Endothelial cell of umbilical vein (primary cell): ENCODE measurements at regions of chr7 and their contacts with region 1.

Region 1: GRCh38 chr7:128387216-128388144 is 22.3 kb downstream of the IMPDH1 start:
- DNase-seq: peak; percentile 71
- H3K4me3 ChIP-seq: no peak overlapping the region
- H3K27ac ChIP-seq: no peak overlapping the region
- H3K4me1 ChIP-seq: no peaks in the 10 kb centered on the region
- H3K27me3 ChIP-seq: peaks cover 0 to 5% of the 10 kb centered on the region in 2 experiments
- CTCF ChIP-seq: peak; percentile 75 to 92
- POLR2A ChIP-seq: no peak

Region 2: DNA sequence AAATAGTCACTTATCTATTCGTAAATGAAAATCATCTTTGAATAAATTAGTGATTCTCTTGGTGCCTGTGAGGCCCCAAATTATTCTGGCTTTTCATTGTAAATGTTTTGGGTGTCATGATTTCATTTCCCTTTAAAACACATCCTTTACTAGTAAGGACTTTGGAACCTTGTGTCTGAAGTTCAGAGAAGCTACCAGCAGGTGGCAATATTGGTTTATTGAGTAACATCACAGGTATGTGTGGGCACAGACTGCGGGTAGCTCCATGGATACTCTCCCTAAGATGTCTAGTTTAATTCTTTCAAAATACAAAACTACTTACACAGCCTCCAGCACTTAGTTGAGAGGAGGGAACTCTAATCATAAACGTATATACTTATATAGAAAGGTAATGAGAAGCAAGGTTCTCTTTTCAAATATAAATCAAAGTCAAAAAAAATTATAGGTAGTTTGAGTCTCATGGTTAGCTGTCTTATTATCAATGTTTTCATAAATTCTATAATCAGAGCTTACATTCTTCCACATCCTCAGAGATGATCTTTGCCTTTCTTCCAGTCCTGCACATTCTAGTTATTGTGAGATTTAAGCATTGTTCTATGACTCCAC is 1584.3 kb before region 1 on chr7:
- CTCF ChIA-PET with region 1: interaction called, 17 read pairs
- POLR2A ChIA-PET with region 1: no interaction called
- dilution Hi-C with region 1: no loop called
- intact Hi-C with region 1: no loop called
- DNase-seq: peak; percentile 65
- H3K4me3 ChIP-seq: no peak overlapping the region
- H3K27ac ChIP-seq: no peak overlapping the region
- H3K4me1 ChIP-seq: no peaks in the 10 kb centered on the region
- H3K27me3 ChIP-seq: no peaks in the 10 kb centered on the region
- CTCF ChIP-seq: peak; percentile 43
- POLR2A ChIP-seq: no peak

Region 3: DNA sequence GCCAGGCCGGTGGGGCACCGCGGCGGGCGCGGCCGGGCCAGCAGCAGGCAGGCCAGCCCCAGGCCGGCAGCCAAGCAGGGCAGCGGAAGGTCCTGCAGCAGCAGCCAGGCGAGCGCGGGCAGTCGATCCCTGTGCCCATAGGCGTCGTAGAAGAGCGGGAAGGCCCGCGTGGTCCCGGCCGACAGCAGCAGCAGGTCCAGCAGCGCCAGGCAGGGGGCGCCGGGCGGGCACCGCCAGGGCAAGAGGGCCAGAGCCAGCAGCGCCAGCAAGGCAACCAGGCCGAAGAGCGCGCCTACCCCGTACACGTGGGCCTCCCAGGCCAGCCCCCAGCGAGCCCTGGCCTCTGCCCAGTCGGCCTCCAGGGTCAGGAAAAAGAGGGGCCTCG is 35.3 kb before region 1 on chr7:
- CTCF ChIA-PET with region 1: interaction called, 778 read pairs
- POLR2A ChIA-PET with region 1: interaction called, 4 read pairs
- dilution Hi-C with region 1: no loop called
- intact Hi-C with region 1: loop called (anchors 1 kb)
- DNase-seq: peak; percentile 72
- H3K4me3 ChIP-seq: no peak overlapping the region
- H3K27ac ChIP-seq: no peak overlapping the region
- H3K4me1 ChIP-seq: no peaks in the 10 kb centered on the region
- H3K27me3 ChIP-seq: peaks cover 46 to 51% of the 10 kb centered on the region in 2 experiments
- CTCF ChIP-seq: peak; percentile 74 to 91
- POLR2A ChIP-seq: no peak

Region 4: DNA sequence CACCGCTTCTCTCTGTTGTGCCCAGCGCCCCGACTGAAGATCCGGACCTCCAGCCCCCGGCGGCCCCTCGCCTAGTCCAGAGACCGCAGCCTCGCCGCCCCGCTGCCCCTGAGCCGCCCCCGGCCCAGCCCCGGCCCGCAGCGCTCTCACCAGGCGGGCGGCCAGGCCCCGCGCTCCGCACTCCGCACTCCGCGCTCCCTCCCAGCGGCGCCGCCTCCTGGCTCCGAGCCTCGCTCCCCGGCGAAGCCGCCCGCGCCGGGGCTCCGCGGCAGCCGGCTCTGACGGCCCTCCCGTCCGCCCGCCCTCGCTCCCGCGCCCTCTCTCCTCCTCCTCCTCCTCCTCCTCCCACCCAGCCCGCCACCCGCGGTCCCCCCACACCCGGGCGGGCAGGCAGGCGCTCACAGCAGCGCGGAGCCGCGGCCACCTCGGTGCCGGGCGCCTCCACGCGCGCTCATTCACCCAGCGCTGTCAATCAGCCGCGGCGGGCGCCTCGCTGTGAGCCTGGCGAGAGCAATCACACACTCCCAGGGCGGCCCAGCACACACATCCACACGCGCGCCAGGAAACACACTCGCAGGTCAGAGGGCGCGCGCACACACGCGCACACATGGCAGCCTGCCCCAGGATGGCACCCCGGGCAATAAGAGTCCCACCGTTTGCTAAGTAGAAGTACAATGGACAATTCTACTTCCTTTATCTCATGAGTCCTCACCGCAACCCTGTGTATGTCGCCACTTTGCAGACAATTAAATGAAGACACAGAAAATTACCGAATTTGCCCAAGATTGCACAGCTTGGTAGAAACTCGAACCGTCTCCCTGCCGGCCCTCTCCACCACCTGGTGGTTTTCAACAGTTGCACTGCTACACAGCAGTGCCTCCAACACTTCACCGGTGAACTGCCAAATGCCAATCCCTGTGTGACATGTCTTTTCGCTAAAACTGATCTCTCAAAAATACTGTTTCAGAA is 25.8 kb before region 1 on chr7 and contains the start of gene PRRT4:
- CTCF ChIA-PET with region 1: interaction called, 778 read pairs
- POLR2A ChIA-PET with region 1: no interaction called
- dilution Hi-C with region 1: no loop called
- intact Hi-C with region 1: loop called (anchors 2 kb)
- DNase-seq: no peak
- H3K4me3 ChIP-seq: peak within 1 kb of the TSS in 2 of 3 experiments; percentile 9 to 32
- H3K27ac ChIP-seq: no peak within 1 kb of the TSS
- H3K4me1 ChIP-seq: peaks cover 4% of the 10 kb centered on the region
- H3K27me3 ChIP-seq: peaks cover 56 to 68% of the 10 kb centered on the region in 2 experiments
- CTCF ChIP-seq: no peak
- POLR2A ChIP-seq: no peak
- total RNA-seq, gene PRRT4: not detected in 2 replicates

Region 5: GRCh38 chr7:128373606-128374005 is 13.9 kb before region 1 on chr7:
- CTCF ChIA-PET with region 1: interaction called, 22 read pairs
- POLR2A ChIA-PET with region 1: no interaction called
- dilution Hi-C with region 1: no loop called
- intact Hi-C with region 1: no loop called
- DNase-seq: no peak
- H3K4me3 ChIP-seq: no peak overlapping the region
- H3K27ac ChIP-seq: no peak overlapping the region
- H3K4me1 ChIP-seq: no peaks in the 10 kb centered on the region
- H3K27me3 ChIP-seq: peaks cover 2 to 8% of the 10 kb centered on the region in 2 experiments
- CTCF ChIP-seq: no peak
- POLR2A ChIP-seq: no peak

Region 6: GRCh38 chr7:128398016-128398840 is 10.7 kb after region 1 on chr7:
- CTCF ChIA-PET with region 1: interaction called, 11 read pairs
- POLR2A ChIA-PET with region 1: no interaction called
- dilution Hi-C with region 1: no loop called
- intact Hi-C with region 1: no loop called
- DNase-seq: peak; percentile 42
- H3K4me3 ChIP-seq: no peak overlapping the region
- H3K27ac ChIP-seq: no peak overlapping the region
- H3K4me1 ChIP-seq: no peaks in the 10 kb centered on the region
- H3K27me3 ChIP-seq: no peaks in the 10 kb centered on the region
- CTCF ChIP-seq: peak; percentile 80 to 92
- POLR2A ChIP-seq: no peak

Region 7: DNA sequence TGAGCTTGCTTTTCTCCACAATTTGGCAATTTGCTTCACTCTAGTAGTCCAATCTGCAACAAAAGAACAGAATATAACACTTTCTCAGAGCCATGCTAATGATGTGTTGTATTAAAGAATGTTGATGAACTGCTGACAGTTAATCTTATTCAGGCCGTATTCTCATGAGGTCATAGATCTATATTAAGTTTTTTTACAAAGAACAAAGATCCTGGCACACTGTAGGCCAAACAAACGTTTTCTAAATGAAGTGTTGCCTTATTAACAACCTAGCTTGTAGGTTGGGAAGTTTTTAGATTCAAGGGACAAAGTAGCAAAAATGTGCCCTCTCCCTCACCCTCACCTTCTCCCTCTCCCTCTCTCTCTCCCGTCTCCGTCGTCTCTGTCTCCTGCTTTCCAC is 75.0 kb after region 1 on chr7:
- CTCF ChIA-PET with region 1: interaction called, 11 read pairs
- POLR2A ChIA-PET with region 1: no interaction called
- dilution Hi-C with region 1: no loop called
- intact Hi-C with region 1: no loop called
- DNase-seq: no peak
- H3K4me3 ChIP-seq: no peak overlapping the region
- H3K27ac ChIP-seq: no peak overlapping the region
- H3K4me1 ChIP-seq: peaks cover 3% of the 10 kb centered on the region
- H3K27me3 ChIP-seq: no peaks in the 10 kb centered on the region
- CTCF ChIP-seq: no peak
- POLR2A ChIP-seq: no peak

Region 8: DNA sequence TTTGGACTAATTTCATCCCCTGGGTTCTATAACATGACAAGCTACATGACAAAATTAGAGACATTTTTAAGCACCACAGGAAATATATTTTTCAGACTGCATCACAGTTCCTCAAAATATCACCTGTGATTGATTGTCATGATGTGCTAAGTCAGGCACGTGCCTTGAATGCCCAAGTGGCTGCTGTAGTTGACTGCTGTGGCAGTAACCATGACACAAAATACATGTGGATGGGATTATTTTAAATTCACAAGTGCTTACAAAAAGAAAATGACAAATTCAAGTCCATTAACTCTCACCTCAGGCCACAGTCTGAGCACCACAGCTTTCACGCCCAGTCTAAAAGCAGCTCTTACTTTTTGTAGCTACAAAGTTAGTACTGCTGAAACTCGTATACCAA is 622.0 kb after region 1 on chr7:
- CTCF ChIA-PET with region 1: no interaction called
- POLR2A ChIA-PET with region 1: no interaction called
- dilution Hi-C with region 1: no loop called
- intact Hi-C with region 1: no loop called
- DNase-seq: no peak
- H3K4me3 ChIP-seq: no peak overlapping the region
- H3K27ac ChIP-seq: no peak overlapping the region
- H3K4me1 ChIP-seq: no peaks in the 10 kb centered on the region
- H3K27me3 ChIP-seq: no peaks in the 10 kb centered on the region
- CTCF ChIP-seq: no peak
- POLR2A ChIP-seq: no peak

Region 9: DNA sequence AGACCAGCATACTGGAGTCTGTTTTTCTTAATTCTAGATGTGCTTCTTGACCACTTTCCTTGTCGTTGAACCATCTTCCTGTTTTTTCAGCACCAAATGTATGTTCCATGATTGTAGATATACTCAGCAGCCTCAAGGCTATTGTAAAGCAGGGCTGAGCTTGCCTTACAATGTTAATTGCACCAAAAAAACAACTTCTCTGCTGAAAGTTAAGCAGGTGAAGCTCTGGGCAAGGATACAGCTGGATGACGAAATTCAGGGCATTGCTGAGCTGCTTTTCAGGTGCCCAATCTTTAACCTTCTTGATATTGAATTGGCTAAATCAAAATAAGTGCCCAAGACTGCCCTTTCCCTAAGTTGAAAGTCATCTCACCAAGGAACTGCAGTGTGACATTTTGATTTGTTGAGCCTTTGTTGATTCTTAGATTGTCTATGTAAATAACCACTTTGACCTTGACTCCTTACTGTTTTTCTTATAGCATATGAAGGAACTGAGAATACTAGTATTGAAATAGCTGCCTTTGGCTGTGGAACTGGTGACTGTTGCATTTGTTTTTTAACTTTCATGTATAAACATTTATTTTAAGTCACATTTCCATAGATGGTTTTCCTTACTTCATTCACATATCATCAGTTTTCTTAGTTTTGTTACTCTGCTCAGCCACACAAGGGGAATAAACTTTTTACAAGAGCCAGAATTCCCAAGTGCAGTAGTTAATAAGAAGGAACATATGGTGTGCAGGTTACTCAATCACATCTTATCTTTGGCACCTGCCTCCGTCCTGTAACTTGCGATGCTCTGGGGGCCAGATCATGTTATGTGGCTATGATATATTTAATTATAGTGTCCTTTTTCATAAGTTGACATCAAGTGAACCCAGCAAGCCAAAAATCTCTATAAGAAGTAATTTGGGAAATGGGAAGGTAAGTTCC is 840.4 kb after region 1 on chr7:
- CTCF ChIA-PET with region 1: no interaction called
- POLR2A ChIA-PET with region 1: no interaction called
- dilution Hi-C with region 1: no loop called
- intact Hi-C with region 1: no loop called
- DNase-seq: no peak
- H3K4me3 ChIP-seq: no peak overlapping the region
- H3K27ac ChIP-seq: no peak overlapping the region
- H3K4me1 ChIP-seq: peaks cover 15% of the 10 kb centered on the region
- H3K27me3 ChIP-seq: no peaks in the 10 kb centered on the region
- CTCF ChIP-seq: no peak
- POLR2A ChIP-seq: no peak